ENCODE measurements at regions of chr6 and their contacts with region 1.

Region 1: GRCh38 chr6:45419571-45420082 is 41.9 kb upstream of the SUPT3H start:
- DNase-seq: peak; percentile 84 to 88 (median 86)
- H3K4me3 ChIP-seq: peak overlapping the region; percentile 55 to 99 (median 87)
- H3K27ac ChIP-seq: no peak overlapping the region
- H3K4me1 ChIP-seq: peaks cover 11 to 53% (median 42%) of the 10 kb centered on the region in 4 experiments
- H3K27me3 ChIP-seq: no peaks in the 10 kb centered on the region

Region 2: GRCh38 chr6:44655412-44656342 is 764.0 kb before region 1 on chr6:
- CTCF ChIA-PET with region 1: interaction called, 35 read pairs
- POLR2A ChIA-PET with region 1: no interaction called
- DNase-seq: peak; percentile 75 to 88 (median 87)
- H3K4me3 ChIP-seq: peak overlapping the region in 3 of 7 experiments; percentile 27 to 53 (median 35)
- H3K27ac ChIP-seq: no peak overlapping the region
- H3K4me1 ChIP-seq: peaks cover 0 to 23% (median 16%) of the 10 kb centered on the region in 4 experiments
- H3K27me3 ChIP-seq: no peaks in the 10 kb centered on the region

Region 3: DNA sequence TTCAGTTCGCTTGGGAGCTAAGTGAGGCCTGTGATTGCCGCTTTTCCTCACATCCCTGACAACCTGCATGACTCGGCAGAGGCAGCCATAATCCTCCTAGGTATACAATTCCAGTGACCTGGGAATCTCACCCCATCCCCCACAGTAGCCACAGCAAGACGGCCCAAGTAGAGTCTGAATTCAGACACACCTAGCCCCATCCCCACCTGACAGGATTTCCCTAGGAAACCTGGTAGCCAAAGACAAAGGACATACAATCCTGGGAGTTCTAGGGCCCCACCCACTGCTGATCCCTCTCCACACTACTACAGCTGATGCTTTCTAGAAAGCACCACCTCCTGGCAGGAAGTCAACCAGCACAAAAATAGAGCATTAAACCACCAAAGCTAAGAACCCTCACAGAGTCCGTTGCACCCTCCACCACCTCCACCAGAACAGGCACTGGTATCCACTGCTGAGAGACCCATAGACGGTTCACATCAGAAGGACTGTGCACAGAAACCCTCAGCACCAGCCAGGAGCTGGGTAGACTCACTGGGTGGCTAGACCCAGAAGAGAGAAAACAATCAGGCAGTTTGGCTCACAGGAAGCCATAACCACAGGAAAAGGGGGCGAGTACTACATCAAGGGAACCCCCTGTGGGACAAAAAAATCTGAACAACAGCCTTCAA is 109.4 kb before region 1 on chr6:
- CTCF ChIA-PET with region 1: no interaction called
- POLR2A ChIA-PET with region 1: no interaction called
- DNase-seq: peak in 2 of 3 donors; percentile 73 to 82
- H3K4me3 ChIP-seq: peak overlapping the region in 4 of 7 experiments; percentile 1 to 38 (median 27)
- H3K27ac ChIP-seq: no peak overlapping the region
- H3K4me1 ChIP-seq: peaks cover 0 to 12% (median 12%) of the 10 kb centered on the region in 4 experiments
- H3K27me3 ChIP-seq: no peaks in the 10 kb centered on the region

Region 4: GRCh38 chr6:45377554-45378333 is 41.9 kb before region 1 on chr6 and contains the start of gene SUPT3H:
- CTCF ChIA-PET with region 1: interaction called, 11 read pairs
- POLR2A ChIA-PET with region 1: interaction called, 3 read pairs
- DNase-seq: peak; percentile 97 to 99 (median 99)
- H3K4me3 ChIP-seq: peak within 1 kb of the TSS; percentile 63 to 99 (median 89)
- H3K27ac ChIP-seq: peak within 1 kb of the TSS; percentile 92 to 97
- H3K4me1 ChIP-seq: peaks cover 9 to 24% (median 14%) of the 10 kb centered on the region in 4 experiments
- H3K27me3 ChIP-seq: no peaks in the 10 kb centered on the region